ENCODE measurements at regions of chr14 and their contacts with region 1.

Region 1: DNA sequence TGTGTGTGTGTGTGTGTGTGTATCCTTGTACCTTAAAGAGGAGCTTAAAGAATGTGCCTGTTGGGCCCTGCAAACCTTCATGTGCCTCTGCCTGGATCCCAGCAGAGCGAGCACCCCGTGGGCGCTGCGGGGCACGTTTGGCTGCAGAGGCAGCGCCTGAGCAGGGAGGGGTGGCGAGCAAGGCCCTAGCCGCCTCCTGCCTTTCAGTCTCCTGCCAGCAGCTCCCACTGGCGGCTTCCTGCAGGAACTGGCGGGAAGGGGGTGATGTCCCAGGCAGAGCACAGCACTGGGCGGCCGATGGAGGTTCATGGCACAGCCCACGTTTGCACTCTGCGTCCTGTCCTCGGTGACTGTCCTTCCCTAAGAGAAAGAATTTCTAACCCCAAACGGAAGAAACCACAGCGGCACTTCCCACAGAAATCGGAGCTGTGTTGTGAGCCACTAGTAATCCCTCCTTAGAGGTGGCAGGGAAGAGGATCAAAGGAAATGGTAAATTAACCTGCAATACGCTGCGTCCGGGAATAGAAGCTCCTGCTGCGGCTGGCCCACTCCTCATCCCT is 19.8 kb downstream of the ZBTB42 start:
- DNase-seq: peak; percentile 64
- ATAC-seq: no peak

Region 2: DNA sequence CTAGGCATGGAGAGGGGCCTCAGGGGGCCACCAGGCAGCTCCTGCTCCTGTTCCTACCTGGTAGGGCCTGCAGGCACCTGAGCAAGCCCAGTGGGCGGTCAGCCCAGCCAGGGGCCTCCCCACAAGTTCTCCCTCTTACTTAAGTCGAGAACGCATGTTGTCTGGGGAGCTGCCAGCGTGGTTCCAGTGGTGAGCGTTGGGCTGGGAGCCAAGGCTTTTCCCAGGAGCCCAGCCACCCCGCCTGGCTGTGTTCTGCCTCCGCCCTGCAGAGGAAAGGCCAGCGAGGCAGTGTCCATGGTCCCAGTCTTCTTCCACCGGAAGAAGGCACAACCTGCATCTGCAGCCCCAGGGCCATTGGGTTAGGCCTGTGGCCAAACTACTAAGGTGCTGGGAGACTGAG is 239.8 kb before region 1 on chr14:
- intact Hi-C with region 1: no loop called
- DNase-seq: peak; percentile 90
- ATAC-seq: peak; percentile 42

Region 3: GRCh38 chr14:104665657-104666522 is 154.9 kb before region 1 on chr14:
- intact Hi-C with region 1: no loop called
- DNase-seq: peak; percentile 61
- ATAC-seq: peak; percentile 83

Region 4: DNA sequence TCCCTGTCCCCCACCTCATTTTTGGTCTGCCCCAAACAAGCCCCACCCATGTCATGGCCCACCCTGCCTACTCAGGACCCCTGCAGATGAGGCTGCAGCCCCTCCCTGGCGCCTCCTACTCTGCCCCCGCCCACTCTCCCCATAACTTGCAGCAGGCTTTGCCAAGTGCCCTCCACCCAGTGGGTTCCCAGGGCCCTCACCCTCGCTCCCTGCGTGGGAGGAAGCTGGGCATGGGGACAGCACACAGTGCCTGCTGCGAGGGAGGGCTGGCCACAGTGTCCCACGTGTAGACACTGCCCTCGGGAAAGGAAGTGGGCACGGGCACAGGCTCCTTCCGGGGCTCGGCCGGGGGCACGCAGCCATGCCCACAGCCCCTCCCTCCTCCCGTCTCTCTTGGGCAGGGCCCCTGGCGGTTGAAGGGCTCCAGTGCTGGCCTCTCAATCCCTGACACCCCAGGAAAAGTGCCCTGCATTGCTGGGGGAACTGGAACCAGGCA is 34.6 kb before region 1 on chr14:
- intact Hi-C with region 1: loop called (anchors 5 kb)
- DNase-seq: peak; percentile 67
- ATAC-seq: peak; percentile 44

Region 5: DNA sequence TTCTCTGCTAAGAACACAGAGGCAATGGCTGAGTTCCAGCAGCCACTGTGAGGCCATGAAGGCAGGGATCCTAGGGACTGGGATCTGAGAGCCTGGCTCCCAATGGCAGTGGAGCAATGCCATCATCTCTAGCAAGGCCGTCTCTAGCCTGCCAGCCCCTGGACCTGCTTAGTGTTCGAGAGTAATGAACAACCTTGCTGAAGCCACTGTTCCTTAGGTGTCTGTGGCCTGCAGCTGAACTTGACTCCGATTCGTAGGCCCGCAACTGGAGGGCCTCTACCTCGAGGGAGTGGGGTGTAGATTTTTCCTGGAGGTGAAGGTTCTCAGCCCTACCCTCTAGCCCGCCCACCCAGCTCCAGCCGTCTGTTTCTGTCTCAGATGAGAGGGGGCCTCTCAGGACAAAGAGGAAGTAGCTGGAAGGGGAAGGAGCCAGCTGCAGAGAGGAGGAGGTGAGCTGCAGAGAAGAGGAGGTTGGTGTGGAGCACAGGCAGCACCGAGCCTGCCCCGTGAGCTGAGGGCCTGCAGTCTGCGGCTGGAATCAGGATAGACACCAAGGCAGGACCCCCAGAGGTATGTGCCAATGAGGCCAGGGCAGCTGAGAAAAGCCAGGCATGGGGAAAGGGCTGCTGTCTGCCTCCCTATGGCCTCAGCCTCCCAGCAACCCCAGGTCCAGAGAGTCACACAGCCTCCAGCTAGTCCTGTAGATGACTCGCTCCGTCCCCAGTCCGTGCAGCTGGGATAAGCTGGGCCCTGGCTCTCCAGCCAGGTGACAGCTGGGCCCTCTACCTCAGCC is 103.9 kb after region 1 on chr14 and contains the start of gene PLD4:
- intact Hi-C with region 1: no loop called
- DNase-seq: peak; percentile 40
- ATAC-seq: no peak
- total RNA-seq, gene PLD4: 0.13 TPM

Region 6: DNA sequence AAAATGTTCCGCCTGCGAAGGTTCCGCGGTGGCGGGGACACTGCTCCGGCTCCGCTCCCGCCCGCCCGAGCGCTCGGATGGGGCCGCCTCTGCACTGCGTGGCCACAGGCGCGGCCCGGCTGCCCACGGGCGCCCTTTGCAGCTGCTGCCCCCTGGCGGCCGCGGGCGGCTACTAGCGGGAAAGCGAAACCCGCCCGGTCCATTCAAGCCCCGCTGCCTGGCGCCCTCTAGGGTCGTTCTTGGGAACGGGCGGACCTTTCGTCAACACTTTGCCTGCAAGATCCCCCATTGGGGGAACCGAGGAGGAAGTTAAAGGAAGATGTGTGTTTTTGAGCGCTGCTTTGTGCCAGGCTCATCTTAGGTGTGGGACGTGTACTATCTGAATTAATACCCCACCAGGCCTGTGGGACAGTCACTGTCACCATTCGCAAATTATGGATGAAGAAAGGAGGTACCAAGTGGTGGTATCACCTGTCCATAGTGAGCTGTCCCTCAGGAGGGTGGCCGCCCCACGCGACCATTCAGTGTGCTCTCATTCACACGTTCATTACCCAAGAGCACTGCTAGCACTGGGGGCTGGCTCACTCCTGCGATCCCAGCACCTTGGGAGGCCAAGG is 225.1 kb after region 1 on chr14:
- intact Hi-C with region 1: no loop called
- DNase-seq: peak; percentile 94
- ATAC-seq: peak; percentile 97